ENCODE measurements at regions of chr16 and their contacts with region 1.

Region 1: GRCh38 chr16:65624666-65625065 is 502.8 kb upstream of the CDH11 start:
- DNase-seq: no peak
- ATAC-seq: no peak
- H3K4me3 Mint-ChIP-seq: no peak overlapping the region
- H3K27ac Mint-ChIP-seq: no peak overlapping the region
- H3K4me1 Mint-ChIP-seq: no peaks in the 10 kb centered on the region
- H3K27me3 Mint-ChIP-seq: no peaks in the 10 kb centered on the region

Region 2: DNA sequence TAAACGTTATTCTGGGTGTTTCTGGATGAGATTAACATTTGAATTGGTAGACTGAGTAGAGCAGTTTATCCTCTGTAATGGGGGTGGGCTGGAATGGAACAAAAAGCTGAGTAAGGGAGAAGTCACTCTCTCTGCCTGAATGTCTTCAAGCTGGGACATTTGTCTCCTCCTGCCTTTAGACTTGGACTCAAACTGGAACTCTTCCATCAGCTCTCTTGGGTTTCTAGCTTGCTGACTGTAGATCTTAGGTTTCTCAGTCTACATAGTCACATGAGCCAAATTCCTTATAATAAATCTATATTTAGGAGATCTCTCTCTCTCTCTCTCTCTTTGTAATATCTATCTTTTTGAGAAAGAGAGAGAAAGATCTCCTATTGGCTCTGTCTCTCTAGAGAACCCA is 50.5 kb after region 1 on chr16:
- CTCF ChIA-PET with region 1: no interaction called
- POLR2A ChIA-PET with region 1: no interaction called
- intact Hi-C with region 1: loop called in 1 of 2 experiments (anchors 5 kb)
- DNase-seq: no peak
- ATAC-seq: no peak
- H3K4me3 Mint-ChIP-seq: no peak overlapping the region
- H3K27ac Mint-ChIP-seq: no peak overlapping the region
- H3K4me1 Mint-ChIP-seq: no peaks in the 10 kb centered on the region
- H3K27me3 Mint-ChIP-seq: peaks cover 4% of the 10 kb centered on the region

Measured in activated CD4-positive, alpha-beta T cell treated with anti-CD3 and anti-CD28 coated beads for 36 hours (primary cell).